ENCODE measurements at regions of chr22 and their contacts with region 1.

Region 1: GRCh38 chr22:38569972-38570778 is at the start of gene DMC1:
- DNase-seq: peak; percentile 52 to 96
- H3K4me3 ChIP-seq: peak within 1 kb of the TSS; percentile 67 to 80
- H3K27ac ChIP-seq: peak within 1 kb of the TSS; percentile 91 to 95
- H3K4me1 ChIP-seq: peaks cover 4 to 35% of the 10 kb centered on the region in 2 donors
- H3K27me3 ChIP-seq: no peaks in the 10 kb centered on the region
- CTCF ChIP-seq: no peak
- total RNA-seq, gene DMC1: not detected

Region 2: DNA sequence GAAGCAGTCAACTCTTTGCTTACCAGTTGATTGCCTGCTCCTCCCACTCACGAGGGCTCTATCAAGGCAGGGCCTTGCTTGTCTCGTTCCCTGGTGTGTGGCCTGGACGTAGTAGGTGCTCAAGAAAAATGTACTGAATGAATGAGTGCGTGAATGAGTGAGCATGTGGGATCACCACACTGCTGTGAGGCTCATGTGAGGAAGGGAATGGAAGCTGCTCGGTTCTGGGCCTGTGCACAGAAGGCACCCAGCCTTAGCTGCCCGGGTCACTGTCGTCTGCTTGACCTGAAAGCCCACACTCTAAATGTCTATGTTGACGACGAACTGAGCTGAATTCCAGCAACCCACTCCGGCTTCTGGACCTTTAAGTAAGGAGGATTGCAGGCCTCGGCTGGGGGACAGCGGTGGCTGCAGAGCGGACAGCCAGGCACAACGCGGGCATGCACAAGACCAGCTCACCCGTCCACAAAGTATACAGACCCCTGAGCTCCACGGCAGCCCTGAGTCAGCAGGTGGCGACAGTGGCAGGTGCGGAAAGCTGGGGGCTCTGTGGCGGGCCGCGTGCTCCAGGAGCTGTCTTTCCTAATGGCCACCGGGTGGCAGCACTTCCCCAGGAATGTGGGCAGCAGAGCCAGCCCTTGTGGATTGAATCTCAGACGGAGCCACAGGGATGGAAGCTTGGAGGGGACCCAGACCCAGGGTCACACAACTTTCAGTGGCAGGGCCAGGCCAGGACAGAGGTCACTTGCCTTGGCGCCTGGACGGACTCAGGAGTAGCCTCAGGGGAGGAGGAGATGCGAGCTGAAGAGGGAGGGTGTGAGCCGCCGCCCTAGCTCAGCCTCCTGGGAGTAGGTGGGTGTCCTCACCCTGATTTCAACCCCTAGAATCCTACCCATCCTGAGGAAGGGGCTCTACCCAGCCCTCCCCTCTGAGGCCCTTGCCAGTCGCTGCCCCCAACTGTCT is 518.0 kb before region 1 on chr22:
- intact Hi-C with region 1: loop called (anchors 1 kb)
- DNase-seq: peak in 1 of 2 donors; percentile 90
- H3K4me3 ChIP-seq: no peak overlapping the region
- H3K27ac ChIP-seq: no peak overlapping the region
- H3K4me1 ChIP-seq: peaks cover 6 to 7% of the 10 kb centered on the region in 2 donors
- H3K27me3 ChIP-seq: no peaks in the 10 kb centered on the region
- CTCF ChIP-seq: peak; percentile 82 to 93 (median 93)

Region 3: DNA sequence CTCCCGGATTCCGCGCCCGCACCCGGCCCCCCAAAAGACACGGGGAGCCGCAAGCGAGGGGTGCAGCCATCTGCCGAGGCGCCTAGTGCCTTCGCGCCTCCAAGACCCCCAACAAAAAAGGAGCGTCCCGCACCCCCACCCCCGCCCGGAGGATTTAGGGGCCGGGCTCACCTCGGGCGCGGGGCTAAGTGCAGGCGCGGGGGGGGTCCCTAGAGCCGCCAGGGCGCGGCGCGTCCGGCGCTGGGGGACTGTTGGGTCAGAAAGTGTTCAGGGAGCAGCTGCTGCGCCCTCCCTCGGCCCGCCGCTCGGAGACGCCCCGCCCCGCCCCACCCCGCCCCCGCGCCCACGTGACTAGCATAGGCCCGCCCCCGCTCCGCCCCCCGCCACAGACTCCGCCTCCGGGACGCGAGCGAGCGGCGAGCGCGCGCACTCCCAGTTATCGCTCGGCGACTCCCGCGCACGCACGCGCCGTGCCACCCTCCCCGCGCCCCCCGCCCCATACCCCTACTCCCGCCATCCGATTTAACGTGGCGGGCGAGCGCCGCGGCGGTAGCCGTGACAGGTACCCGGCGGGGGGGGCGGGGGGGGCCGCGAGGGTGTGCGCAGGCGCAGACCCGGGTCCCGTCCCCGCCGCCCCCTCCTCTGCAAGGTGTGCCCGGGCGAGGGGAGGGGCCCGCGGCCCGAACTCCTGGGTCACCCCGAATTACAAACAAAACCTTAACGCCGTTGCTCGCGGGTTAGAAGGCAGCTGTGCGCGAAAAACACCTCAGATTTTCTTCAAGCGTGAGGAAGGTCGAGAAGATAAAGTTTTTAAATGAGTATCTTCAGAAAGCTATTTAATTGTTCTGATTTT is 171.3 kb before region 1 on chr22:
- intact Hi-C with region 1: loop called (anchors 1 kb)
- DNase-seq: peak in 1 of 2 donors; percentile 85
- H3K4me3 ChIP-seq: peak overlapping the region; percentile 82 to 97
- H3K27ac ChIP-seq: peak overlapping the region; percentile 77 to 86
- H3K4me1 ChIP-seq: peaks cover 0 to 3% of the 10 kb centered on the region in 2 donors
- H3K27me3 ChIP-seq: no peaks in the 10 kb centered on the region
- CTCF ChIP-seq: no peak

Region 4: DNA sequence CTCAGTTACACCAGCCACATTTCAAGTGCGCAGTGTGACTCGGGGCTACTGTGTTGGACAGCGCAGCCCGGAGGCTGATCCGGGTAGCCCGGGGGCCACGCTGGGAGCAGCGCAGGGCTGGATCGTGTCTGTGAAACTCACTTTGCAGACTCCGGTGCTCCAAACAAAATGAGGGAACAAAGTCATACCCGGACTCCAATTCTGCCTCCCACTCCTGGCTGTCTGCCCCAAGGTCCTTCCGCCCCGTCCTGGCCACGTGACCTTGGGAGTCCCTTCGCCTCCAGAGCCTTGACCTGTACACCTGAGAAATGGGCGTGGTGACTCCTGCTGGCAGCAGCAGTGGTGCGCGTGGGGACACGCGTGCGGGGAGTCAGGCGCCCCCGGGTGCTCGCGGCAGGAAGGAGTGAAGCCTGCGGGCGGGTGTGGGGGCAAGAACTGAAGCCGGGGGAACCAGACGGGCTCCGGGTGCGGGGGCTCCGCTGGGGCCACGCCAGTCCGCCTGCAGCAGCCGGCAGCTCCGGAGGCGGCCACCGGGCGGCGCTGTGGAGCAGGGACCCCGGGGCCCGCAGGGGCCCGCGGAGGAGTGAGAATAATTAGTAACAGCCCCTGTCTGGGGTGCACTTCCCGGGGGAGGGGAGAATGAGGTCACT is 157.6 kb before region 1 on chr22:
- intact Hi-C with region 1: loop called (anchors 2 kb)
- DNase-seq: no peak
- H3K4me3 ChIP-seq: peak overlapping the region in 1 of 2 donors; percentile 45
- H3K27ac ChIP-seq: no peak overlapping the region
- H3K4me1 ChIP-seq: peaks cover 0 to 4% of the 10 kb centered on the region in 2 donors
- H3K27me3 ChIP-seq: no peaks in the 10 kb centered on the region
- CTCF ChIP-seq: peak; percentile 65 to 81 (median 75)

Region 5: DNA sequence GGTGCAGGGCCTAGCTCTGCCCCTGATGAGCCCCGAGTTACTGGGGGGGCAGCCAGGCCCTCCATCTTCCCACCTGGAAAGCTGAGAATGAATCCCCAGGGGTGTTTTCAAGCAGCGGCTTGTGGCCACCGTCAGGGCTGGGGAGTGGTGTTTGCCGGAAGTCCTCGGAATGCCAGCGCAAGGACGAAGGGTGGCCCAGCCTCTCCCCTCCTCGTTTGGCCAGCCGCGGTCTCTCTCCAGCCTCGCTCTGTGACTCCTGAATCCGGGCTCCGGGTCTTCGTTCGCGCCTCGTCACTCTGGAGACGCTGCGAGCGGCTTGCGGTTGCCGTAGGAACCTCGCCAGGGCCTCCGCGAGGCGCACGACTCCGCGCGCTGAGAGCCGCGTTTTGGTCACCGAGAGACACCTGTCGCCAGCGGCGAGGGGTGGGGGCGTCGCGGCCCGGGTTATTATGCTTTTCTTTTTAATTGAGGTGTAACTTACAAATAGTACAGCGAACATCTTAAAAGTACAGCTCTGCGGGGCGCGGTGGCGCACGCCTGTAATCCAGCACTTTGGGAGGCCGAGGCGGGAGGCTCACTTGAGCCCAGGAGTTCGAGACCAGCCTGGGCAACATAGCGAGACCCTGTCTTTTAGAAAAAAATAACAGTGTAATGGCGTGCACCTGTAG is 108.6 kb before region 1 on chr22:
- intact Hi-C with region 1: loop called (anchors 2 kb)
- DNase-seq: peak; percentile 28 to 86
- H3K4me3 ChIP-seq: peak overlapping the region; percentile 1 to 43
- H3K27ac ChIP-seq: no peak overlapping the region
- H3K4me1 ChIP-seq: peaks cover 9 to 11% of the 10 kb centered on the region in 2 donors
- H3K27me3 ChIP-seq: no peaks in the 10 kb centered on the region
- CTCF ChIP-seq: peak in 1 of 3 experiments; percentile 18

Region 6: DNA sequence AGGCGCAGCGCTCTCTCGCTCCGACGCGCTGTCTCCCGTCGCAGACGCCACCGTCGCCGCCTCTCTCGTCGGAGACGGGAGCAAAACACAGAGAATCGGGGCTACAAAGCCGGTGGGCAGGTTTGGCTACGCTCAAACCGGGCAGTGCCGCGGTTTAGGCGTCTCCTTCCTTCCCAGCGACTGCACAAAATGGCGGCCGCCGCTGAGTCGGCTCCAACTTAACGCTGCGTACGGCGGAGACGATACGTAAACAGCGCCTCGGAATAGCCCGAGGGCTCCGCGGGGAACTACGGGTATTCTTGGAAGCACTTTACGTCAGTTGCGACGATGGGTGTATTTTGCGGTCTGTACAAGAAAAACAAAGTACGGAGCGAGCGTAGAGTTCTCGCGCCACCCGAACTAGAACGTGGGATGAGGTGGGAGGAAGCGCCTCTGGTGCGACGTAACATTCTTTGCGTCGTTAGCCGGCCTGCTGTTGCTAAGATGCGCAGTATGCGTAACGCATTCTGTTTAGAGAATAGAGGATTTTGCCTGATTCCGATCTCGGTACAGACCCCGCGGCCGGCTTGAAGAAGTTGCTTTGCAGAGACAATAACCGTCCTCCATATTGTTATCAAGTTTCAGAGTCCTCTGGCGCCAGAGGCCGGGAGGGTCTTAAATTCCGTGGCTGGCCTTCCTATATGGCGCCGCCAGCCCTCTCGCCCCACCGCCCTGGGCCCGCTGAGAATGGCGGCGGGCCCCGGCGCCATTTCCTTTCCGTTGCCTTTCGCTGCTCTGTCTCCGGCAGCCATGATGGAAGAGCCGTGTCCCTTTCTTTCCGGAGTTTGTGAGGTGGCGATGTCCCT is 63.8 kb before region 1 on chr22 and contains the start of gene DDX17:
- intact Hi-C with region 1: loop called (anchors 1 kb)
- DNase-seq: peak; percentile 77 to 97
- H3K4me3 ChIP-seq: peak within 1 kb of the TSS; percentile 77 to 96
- H3K27ac ChIP-seq: peak within 1 kb of the TSS; percentile 100
- H3K4me1 ChIP-seq: peaks cover 3 to 26% of the 10 kb centered on the region in 2 donors
- H3K27me3 ChIP-seq: no peaks in the 10 kb centered on the region
- CTCF ChIP-seq: no peak
- total RNA-seq, gene DDX17: 837 TPM

Region 7: DNA sequence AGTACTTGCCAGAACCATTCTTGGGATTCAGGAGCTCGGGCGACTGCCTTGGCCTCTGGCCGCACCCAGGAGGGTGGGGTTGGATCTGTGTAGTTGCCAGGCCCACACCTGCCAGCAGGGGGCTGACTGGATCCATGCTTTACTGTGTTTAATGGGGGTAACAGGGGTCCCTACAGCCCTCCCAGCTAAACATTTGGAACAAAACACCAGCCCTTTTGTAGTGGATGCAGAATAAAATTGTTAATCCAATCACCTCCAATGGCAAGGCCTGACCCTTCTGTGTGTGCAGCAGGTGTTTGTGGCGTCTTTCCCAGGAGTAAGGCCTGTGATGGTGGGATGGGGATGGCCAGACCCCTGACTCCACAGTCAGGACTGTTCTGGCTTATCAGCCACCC is 163.2 kb after region 1 on chr22:
- intact Hi-C with region 1: no loop called
- DNase-seq: no peak
- H3K4me3 ChIP-seq: no peak overlapping the region
- H3K27ac ChIP-seq: peak overlapping the region; percentile 69 to 83
- H3K4me1 ChIP-seq: peaks cover 20 to 22% of the 10 kb centered on the region in 2 donors
- H3K27me3 ChIP-seq: no peaks in the 10 kb centered on the region
- CTCF ChIP-seq: peak; percentile 51 to 60 (median 53)

Measured in ascending aorta (tissue), 2 donors.